HCT116 (cell line): ENCODE measurements at regions of chr4 and their contacts with region 1.

Region 1: GRCh38 chr4:187606581-187606980 is 389.0 kb upstream of the ZFP42 start:
- DNase-seq: peak; percentile 54
- ATAC-seq: peak; percentile 87
- H3K4me3 ChIP-seq: no peak overlapping the region
- H3K27ac ChIP-seq: no peak overlapping the region
- H3K4me1 ChIP-seq: peaks cover 11 to 28% of the 10 kb centered on the region in 2 experiments
- H3K27me3 ChIP-seq: no peaks in the 10 kb centered on the region
- CTCF ChIP-seq: peak; percentile 74 to 95 (median 84)
- POLR2A ChIP-seq: no peak
- RAD21 ChIP-seq: peak; percentile 90

Region 2: DNA sequence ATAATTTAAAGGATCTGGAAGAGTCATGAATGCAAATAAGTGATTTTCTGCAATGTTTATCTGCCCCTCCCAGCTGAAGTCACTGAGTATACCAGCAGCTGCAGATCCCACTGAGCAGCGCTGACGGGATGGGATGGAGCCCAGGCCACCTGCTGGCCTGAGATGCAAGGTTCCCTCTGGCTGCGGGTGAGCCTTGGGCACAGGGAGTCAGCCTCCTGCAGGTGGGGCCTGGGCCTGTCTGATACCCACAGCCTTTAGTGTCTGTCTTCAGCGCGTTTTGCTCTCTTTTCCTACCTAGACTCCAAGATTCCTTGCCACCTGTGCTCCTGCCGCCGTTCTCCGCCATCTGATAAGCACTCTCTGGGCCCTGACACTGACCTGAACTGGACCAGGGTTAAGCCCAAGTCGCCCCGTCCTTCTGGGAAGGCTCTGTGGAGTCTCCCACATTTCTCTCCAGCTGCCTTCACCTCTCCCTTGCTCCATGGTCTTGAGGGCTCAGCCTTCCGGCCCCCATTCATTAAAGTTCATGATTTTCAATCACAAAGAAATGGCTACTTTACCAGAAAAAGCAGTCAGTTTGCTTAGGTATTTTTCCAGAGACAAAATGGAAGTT is 659.8 kb before region 1 on chr4:
- CTCF ChIA-PET with region 1: interaction called, 3 read pairs
- POLR2A ChIA-PET with region 1: no interaction called
- RAD21 ChIA-PET with region 1: no interaction called
- intact Hi-C with region 1: loop called (anchors 10 kb)
- DNase-seq: peak; percentile 79
- ATAC-seq: peak; percentile 98
- H3K4me3 ChIP-seq: no peak overlapping the region
- H3K27ac ChIP-seq: peak overlapping the region; percentile 31
- H3K4me1 ChIP-seq: peaks cover 24 to 68% of the 10 kb centered on the region in 2 experiments
- H3K27me3 ChIP-seq: no peaks in the 10 kb centered on the region
- CTCF ChIP-seq: peak; percentile 82 to 89 (median 82); a peak in 5 of 6 replicates
- POLR2A ChIP-seq: no peak
- RAD21 ChIP-seq: peak; percentile 89

Region 3: DNA sequence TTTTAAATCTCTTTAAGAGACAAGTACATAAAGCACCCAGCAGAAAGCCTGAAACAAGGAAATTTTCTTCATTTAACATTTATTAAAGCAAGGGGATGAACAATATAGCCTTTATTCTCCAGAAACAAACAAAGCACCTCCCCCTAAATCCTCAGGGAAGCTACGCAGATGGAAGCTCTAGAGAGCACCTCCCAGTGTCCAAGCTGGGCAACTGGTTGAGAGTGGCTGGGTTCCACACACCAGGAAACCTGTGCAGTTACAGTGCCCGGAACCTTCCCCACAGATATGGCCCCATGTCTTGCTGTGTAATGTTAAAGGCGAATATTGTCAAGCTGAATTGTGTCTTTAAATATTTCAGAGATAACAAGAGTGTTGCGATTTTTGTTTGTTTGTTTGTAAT is 523.8 kb after region 1 on chr4:
- CTCF ChIA-PET with region 1: no interaction called
- POLR2A ChIA-PET with region 1: no interaction called
- RAD21 ChIA-PET with region 1: no interaction called
- intact Hi-C with region 1: loop called (anchors 5 kb)
- DNase-seq: peak; percentile 41
- ATAC-seq: peak; percentile 75
- H3K4me3 ChIP-seq: no peak overlapping the region
- H3K27ac ChIP-seq: no peak overlapping the region
- H3K4me1 ChIP-seq: peaks cover 15 to 39% of the 10 kb centered on the region in 2 experiments
- H3K27me3 ChIP-seq: no peaks in the 10 kb centered on the region
- CTCF ChIP-seq: peak; percentile 39 to 68 (median 64); a peak in 5 of 6 replicates
- POLR2A ChIP-seq: no peak
- RAD21 ChIP-seq: peak; percentile 56

Region 4: DNA sequence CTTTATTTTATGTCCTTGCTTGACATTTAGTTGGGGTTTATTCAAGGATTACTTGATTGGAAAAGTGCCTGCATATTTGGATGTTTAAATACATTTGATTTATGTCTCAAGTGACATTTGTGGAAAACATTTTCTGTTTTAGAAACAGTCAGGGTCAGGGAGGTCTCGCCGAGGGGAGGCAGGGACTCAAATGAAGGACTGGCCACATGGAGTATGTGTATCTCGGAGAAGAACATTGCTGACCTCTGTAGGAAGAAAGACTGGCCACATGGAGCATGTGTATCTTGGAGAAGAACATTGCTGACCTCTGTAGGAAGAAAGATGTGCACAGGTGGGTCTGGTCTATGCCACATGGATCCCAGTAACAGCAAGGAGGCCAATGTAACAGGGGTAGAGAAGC is 766.2 kb after region 1 on chr4:
- CTCF ChIA-PET with region 1: no interaction called
- POLR2A ChIA-PET with region 1: no interaction called
- RAD21 ChIA-PET with region 1: no interaction called
- intact Hi-C with region 1: loop called (anchors 2 kb)
- DNase-seq: peak; percentile 67
- ATAC-seq: peak; percentile 99
- H3K4me3 ChIP-seq: no peak overlapping the region
- H3K27ac ChIP-seq: no peak overlapping the region
- H3K4me1 ChIP-seq: peaks cover 10 to 15% of the 10 kb centered on the region in 2 experiments
- H3K27me3 ChIP-seq: no peaks in the 10 kb centered on the region
- CTCF ChIP-seq: peak; percentile 28 to 97 (median 51); a peak in 5 of 6 replicates
- POLR2A ChIP-seq: no peak
- RAD21 ChIP-seq: peak; percentile 78

Region 5: DNA sequence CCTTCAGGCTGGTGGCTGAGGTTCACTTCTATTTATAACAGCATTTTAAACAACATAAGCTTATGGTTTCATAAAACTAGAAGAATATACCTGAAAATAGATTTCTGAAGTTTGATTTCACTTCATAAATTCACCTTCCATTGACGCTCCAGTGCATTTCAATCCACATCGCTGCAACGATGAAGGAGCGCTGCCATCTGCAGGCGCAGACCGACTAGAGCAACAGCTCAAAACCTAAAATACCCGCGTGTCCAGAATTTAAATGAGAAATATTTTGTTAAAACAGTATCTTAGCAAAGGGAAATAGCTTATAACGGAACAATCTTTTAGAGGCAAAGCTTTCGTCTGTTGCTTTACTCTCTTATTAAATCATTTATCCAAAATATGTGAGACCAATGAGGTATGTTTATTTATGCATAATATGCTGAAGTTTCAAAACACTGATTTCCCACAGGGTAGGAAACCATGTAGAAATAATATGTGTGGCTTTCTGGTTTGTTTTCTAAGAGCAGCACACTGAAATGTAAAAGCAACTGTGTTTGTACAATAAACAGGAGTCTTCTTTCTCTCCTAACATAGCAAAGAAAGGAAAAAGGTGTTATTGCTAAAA is 1517.7 kb after region 1 on chr4:
- CTCF ChIA-PET with region 1: no interaction called
- POLR2A ChIA-PET with region 1: no interaction called
- RAD21 ChIA-PET with region 1: no interaction called
- intact Hi-C with region 1: loop called (anchors 1 kb)
- DNase-seq: peak; percentile 22
- ATAC-seq: peak; percentile 82
- H3K4me3 ChIP-seq: no peak overlapping the region
- H3K27ac ChIP-seq: no peak overlapping the region
- H3K4me1 ChIP-seq: no peaks in the 10 kb centered on the region
- H3K27me3 ChIP-seq: no peaks in the 10 kb centered on the region
- CTCF ChIP-seq: peak; percentile 56 to 76 (median 64); a peak in 5 of 6 replicates
- POLR2A ChIP-seq: no peak
- RAD21 ChIP-seq: peak; percentile 89